OCI-LY7 (cell line): ENCODE measurements at regions of chr2 and their contacts with region 1.

Region 1: DNA sequence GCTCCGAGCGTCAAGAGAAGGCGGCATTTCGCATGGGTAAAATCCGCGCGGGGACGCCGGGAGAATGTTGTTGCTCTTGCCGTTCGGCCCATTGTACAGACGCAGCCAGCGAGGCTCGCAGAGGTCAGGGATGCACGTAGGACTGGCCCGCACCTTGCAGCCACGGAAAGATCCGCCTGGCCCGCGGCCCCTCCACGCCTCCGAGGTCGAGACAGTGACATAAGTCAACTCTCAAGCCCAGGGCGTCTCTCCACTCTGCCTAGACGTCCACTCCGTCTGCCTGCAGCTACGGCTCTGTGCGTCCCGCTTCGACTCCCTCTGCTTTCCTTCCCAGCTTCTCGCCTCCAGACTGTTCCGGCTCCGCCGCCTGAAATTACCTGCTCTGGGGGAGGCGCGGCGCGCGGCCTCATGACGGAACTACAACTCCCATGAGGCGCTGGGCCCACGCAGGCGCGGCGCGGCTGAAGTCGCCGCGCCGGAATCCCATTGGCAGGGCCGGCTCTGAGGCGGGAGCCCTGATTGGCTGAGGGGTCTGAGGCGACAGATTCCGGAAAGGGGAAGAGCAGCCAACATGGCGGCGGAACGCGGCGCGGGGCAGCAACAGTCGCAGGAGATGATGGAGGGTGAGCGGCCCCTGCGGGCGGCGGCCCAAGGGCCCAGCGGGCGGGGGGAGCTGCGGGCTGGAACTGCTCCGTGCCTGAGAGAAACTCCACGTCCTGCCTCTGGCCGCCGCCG is at the start of gene PPP1R7:
- DNase-seq: peak; percentile 96
- H3K4me3 ChIP-seq: peak within 1 kb of the TSS; percentile 94
- H3K27ac ChIP-seq: peak within 1 kb of the TSS; percentile 35
- H3K4me1 ChIP-seq: peaks cover 37% of the 10 kb centered on the region
- CTCF ChIP-seq: no peak
- total RNA-seq, gene PPP1R7: 46.0 and 61.4 TPM in 2 replicates

Region 2: DNA sequence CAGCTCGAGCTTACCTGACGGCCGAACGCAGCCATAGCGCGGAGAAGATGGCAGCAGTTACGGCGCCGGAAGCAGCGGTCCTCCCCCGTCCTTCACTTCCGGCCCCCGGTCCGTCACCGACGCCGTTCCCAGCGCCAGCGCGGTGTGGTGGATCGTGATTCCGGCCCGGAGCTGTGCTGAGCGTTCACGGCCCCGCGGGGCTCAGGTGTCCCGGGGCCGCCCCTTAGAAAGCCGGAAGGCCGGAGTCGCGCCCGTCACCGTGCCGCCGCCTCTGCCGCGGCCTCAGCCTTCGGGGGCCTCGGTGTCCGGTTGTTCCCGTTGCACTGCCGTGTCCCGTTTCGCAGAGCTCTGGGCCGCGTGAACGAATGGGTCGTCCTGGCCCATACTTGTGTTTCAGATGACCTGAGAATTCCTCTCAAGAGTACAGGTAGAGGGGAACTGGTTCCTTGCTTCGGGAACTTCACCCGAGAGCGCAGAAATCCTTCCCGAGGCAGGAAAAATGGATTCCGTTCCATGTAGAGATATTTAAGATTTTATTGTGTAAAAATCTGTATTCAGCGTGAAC is 47.8 kb before region 1 on chr2 and contains the start of gene MTERF4:
- CTCF ChIA-PET with region 1: no interaction called
- POLR2A ChIA-PET with region 1: interaction called, 4 read pairs
- intact Hi-C with region 1: loop called (anchors 1 kb)
- DNase-seq: peak; percentile 93
- H3K4me3 ChIP-seq: peak within 1 kb of the TSS; percentile 82
- H3K27ac ChIP-seq: peak within 1 kb of the TSS; percentile 63
- H3K4me1 ChIP-seq: peaks cover 33% of the 10 kb centered on the region
- CTCF ChIP-seq: no peak
- total RNA-seq, gene MTERF4: 57.7 and 58.9 TPM in 2 replicates

Region 3: DNA sequence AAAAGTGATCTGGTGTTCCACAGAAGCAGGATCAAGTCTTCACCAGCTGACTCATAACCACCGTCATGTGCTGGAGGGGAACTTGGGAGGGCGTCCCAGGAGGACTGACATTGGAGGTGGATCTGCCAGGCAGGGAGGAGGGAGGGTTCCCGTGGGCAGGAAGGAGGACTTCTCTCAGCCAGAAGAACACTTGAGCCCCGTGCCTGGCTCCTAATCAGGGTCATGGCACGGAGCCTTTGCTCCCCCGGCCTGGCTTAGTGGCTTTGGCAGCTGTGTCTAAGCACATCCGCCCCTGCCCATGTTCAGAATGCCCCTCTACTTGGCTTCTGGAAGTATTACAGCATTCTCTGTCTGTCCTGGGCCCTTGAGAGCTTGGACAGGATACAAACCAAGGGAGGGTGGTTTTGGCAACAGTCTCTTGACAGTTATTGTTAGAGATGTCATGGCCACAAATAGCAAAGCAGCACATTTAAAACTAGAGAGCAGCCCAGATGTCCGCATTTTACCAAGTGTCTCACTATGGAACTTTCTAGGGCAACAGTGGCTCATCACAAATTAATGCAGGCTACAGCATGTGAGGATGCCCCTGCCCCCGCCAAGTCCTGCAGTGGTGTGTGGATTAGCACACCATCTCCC is 11.7 kb after region 1 on chr2:
- CTCF ChIA-PET with region 1: no interaction called
- POLR2A ChIA-PET with region 1: no interaction called
- intact Hi-C with region 1: no loop called
- DNase-seq: no peak
- H3K4me3 ChIP-seq: no peak overlapping the region
- H3K27ac ChIP-seq: no peak overlapping the region
- H3K4me1 ChIP-seq: no peaks in the 10 kb centered on the region
- CTCF ChIP-seq: no peak

Region 4: GRCh38 chr2:241232736-241233554 is 82.9 kb after region 1 on chr2:
- CTCF ChIA-PET with region 1: no interaction called
- POLR2A ChIA-PET with region 1: no interaction called
- intact Hi-C with region 1: no loop called
- DNase-seq: no peak
- H3K4me3 ChIP-seq: no peak overlapping the region
- H3K27ac ChIP-seq: no peak overlapping the region
- H3K4me1 ChIP-seq: no peaks in the 10 kb centered on the region
- CTCF ChIP-seq: no peak

Region 5: GRCh38 chr2:241561833-241562232 is 411.7 kb after region 1 on chr2:
- CTCF ChIA-PET with region 1: no interaction called
- POLR2A ChIA-PET with region 1: no interaction called
- intact Hi-C with region 1: no loop called
- DNase-seq: no peak
- H3K4me3 ChIP-seq: no peak overlapping the region
- H3K27ac ChIP-seq: no peak overlapping the region
- H3K4me1 ChIP-seq: no peaks in the 10 kb centered on the region
- CTCF ChIP-seq: no peak